ENCODE measurements at regions of chr15 and their contacts with region 1.

Region 1: GRCh38 chr15:99704444-99704838 is 28.8 kb downstream of the LYSMD4 start:
- DNase-seq: no peak
- ATAC-seq: peak; percentile 75

Region 2: GRCh38 chr15:99282121-99282520 is 422.3 kb before region 1 on chr15:
- intact Hi-C with region 1: loop called (anchors 5 kb)
- DNase-seq: no peak
- ATAC-seq: no peak

Region 3: GRCh38 chr15:99442252-99442897 is 262.1 kb before region 1 on chr15:
- intact Hi-C with region 1: loop called (anchors 10 kb)
- DNase-seq: peak; percentile 85
- ATAC-seq: peak; percentile 94

Measured in left ventricle myocardium superior (tissue), 1 donor.